ENCODE measurements at regions of chr5 and their contacts with region 1.

Region 1: DNA sequence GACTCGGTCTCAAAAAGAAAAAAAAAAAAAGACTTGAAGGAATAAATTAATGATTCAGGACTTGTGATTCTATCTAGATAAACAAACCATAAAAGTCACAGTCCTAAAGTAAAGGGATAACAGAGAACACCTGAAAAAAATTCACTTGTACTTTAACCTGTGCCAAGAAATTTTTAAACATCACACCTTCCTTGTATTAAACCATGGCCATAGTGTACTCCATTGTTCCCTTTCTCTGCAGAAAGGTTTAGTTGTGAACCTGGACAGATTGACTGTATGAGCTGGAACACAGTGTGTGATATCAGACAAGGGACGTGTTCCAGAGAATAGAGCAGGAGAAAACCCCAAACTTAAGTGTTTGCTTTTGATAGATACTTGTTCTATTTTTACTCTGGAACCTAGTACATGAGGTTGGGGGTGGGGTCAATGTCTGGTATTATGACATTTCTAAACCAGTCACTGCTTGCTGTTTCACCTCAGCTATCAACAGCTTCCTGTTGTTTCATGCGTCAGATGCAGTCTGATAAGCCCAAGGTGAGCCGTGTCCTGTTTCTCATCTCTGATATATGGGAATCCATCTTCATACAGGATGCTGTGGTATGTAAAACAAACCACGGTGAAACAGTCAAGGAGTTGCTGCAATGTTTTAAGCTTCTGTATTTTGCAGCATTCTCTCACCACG is 62.5 kb upstream of the ITGA1 start:
- DNase-seq: peak in 8 of 9 donors; percentile 44 to 94 (median 90)
- ATAC-seq: peak; percentile 98
- H3K4me3 ChIP-seq: no peak overlapping the region
- H3K4me3 Mint-ChIP-seq: peak overlapping the region; percentile 63 to 92 (median 81)
- H3K27ac ChIP-seq: peak overlapping the region; percentile 61
- H3K27ac Mint-ChIP-seq: peak overlapping the region; percentile 89 to 98 (median 95)
- H3K4me1 ChIP-seq: peaks cover 33 to 37% of the 10 kb centered on the region in 2 donors
- H3K4me1 Mint-ChIP-seq: peaks cover 28 to 81% (median 69%) of the 10 kb centered on the region in 7 donors
- H3K27me3 ChIP-seq: no peaks in the 10 kb centered on the region
- H3K27me3 Mint-ChIP-seq: no peaks in the 10 kb centered on the region

Region 2: DNA sequence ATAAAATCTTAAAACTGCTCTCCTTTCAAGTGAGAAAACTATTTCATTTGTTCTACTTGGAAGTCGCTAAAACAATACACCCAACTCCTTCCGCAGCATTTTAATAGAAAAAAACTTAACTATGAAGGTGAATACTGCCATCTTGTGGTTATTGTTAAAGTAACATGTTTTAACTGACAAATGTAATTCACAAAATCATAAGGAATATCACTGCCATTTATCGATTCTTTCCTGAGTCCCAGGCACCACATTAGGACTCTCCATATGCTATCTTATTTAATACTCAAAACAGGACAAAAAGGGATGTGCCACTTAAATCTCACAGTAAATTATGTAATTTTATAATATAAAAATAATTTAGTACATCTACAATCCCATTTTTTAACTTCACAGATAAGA is 68.0 kb before region 1 on chr5:
- CTCF ChIA-PET with region 1: no interaction called
- POLR2A ChIA-PET with region 1: no interaction called
- intact Hi-C with region 1: loop called in 1 of 2 experiments (anchors 2 kb)
- DNase-seq: peak in 6 of 9 donors; percentile 14 to 61 (median 50)
- ATAC-seq: peak; percentile 57
- H3K4me3 ChIP-seq: no peak overlapping the region
- H3K4me3 Mint-ChIP-seq: no peak overlapping the region
- H3K27ac ChIP-seq: no peak overlapping the region
- H3K27ac Mint-ChIP-seq: no peak overlapping the region
- H3K4me1 ChIP-seq: no peaks in the 10 kb centered on the region
- H3K4me1 Mint-ChIP-seq: peaks cover 0 to 6% (median 0%) of the 10 kb centered on the region in 7 donors
- H3K27me3 ChIP-seq: no peaks in the 10 kb centered on the region
- H3K27me3 Mint-ChIP-seq: peaks cover 7 to 40% (median 11%) of the 10 kb centered on the region in 5 donors

Region 3: DNA sequence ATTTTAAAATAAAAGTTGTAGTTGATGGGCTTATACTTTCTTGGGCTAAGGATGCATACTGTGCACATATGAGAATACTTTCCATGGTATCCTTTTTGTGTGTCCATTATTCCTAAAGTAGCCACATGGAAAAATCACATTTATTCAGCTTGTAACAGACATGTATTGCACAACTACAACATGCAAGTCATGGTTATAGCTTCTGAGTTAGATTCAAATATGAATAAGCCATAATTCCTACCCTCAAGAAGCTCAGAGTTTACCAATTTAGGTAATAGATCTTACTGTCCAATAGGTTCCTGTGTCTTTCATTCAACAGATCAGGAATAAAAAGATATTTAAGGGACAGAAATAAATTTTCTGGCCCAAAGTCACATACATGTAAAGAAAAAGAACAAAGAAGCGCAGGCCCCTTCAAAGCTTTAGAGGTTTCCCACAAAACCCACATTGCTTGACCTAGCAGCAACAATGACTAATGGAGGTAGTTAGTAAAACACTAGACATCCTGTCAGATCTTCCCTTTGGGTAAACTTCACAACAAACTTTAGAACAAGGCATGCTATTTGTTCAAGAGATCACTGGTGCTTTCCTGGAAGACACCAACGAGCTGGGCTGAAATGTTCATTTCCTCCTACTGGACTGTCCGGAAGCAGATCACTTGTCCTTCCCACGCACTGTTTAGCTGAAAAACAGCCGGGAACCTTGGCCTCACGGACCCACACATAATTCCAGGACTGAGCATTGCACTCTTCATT is 15.9 kb before region 1 on chr5:
- CTCF ChIA-PET with region 1: no interaction called
- POLR2A ChIA-PET with region 1: interaction called, 4 read pairs
- intact Hi-C with region 1: loop called (anchors 1 kb)
- DNase-seq: peak in 1 of 9 donors; percentile 36
- ATAC-seq: no peak
- H3K4me3 ChIP-seq: no peak overlapping the region
- H3K4me3 Mint-ChIP-seq: peak overlapping the region in 1 of 10 donors; percentile 50
- H3K27ac ChIP-seq: no peak overlapping the region
- H3K27ac Mint-ChIP-seq: peak overlapping the region in 1 of 9 donors; percentile 61
- H3K4me1 ChIP-seq: peaks cover 20 to 39% of the 10 kb centered on the region in 2 donors
- H3K4me1 Mint-ChIP-seq: peaks cover 24 to 83% (median 63%) of the 10 kb centered on the region in 7 donors
- H3K27me3 ChIP-seq: no peaks in the 10 kb centered on the region
- H3K27me3 Mint-ChIP-seq: peaks cover 0 to 5% (median 0%) of the 10 kb centered on the region in 5 donors

Region 4: GRCh38 chr5:52743970-52744369 is 18.8 kb after region 1 on chr5:
- CTCF ChIA-PET with region 1: interaction called, 9 read pairs
- POLR2A ChIA-PET with region 1: interaction called, 17 read pairs
- intact Hi-C with region 1: loop called (anchors 1 kb)
- DNase-seq: peak in 8 of 9 donors; percentile 24 to 68 (median 54)
- ATAC-seq: peak; percentile 91
- H3K4me3 ChIP-seq: no peak overlapping the region
- H3K4me3 Mint-ChIP-seq: peak overlapping the region in 9 of 10 donors; percentile 42 to 70 (median 61)
- H3K27ac ChIP-seq: peak overlapping the region; percentile 49
- H3K27ac Mint-ChIP-seq: peak overlapping the region; percentile 80 to 93 (median 90)
- H3K4me1 ChIP-seq: peaks cover 35 to 36% of the 10 kb centered on the region in 2 donors
- H3K4me1 Mint-ChIP-seq: peaks cover 35 to 69% (median 61%) of the 10 kb centered on the region in 7 donors
- H3K27me3 ChIP-seq: no peaks in the 10 kb centered on the region
- H3K27me3 Mint-ChIP-seq: peaks cover 0 to 5% (median 0%) of the 10 kb centered on the region in 5 donors

Region 5: DNA sequence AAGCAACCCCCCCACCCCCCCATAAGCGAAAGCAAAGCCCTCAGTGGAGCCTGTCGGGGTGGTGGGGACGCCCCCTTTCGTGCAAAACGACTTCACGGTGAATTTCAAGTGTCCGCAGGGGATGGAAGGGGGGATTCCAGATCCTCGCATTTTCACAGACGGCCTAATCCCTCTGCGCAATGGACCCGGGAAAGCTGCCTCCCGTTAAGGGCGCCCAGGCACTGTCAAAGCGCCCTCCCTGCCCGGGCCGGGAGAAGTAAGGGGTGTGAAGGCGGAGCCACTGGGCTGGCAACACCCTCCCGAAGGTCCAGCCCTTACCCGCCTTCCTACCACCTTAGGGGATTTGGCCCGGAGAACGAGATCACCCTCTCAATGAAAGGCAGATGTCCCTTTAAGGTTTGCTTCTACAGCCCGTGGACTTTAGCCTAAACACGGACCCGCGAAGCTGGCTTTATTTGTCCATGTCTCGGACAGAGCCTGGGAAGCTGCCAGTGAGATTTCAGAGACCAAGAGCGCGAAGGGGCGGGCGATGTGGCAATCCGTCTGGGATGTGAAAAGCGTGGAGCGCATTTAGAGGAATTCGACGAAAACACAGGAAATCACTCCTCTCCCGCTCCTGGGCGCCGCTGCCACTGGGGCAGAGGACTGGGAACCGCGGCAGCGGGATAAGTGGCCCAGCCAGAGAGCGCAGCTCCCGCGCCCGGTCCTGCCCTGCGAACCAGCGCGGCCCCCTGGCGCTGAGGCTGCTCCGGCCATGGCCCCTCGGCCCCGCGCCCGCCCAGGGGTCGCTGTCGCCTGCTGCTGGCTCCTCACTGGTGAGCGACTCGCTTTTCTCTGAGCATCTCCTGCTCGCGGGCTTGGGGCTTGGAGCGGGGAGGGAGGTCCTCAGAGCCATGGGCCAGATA is 62.6 kb after region 1 on chr5 and contains the starts of genes ITGA1 and PELO:
- CTCF ChIA-PET with region 1: interaction called, 3 read pairs
- POLR2A ChIA-PET with region 1: interaction called, 5 read pairs
- intact Hi-C with region 1: loop called (anchors 1 to 5 kb)
- DNase-seq: peak; percentile 13 to 55 (median 44)
- ATAC-seq: peak; percentile 84
- H3K4me3 ChIP-seq: peak within 1 kb of the TSS; percentile 71
- H3K4me3 Mint-ChIP-seq: peak within 1 kb of the TSS; percentile 85 to 95 (median 92)
- H3K27ac ChIP-seq: peak within 1 kb of the TSS; percentile 67
- H3K27ac Mint-ChIP-seq: peak within 1 kb of the TSS; percentile 7 to 87 (median 59)
- H3K4me1 ChIP-seq: peaks cover 0 to 15% of the 10 kb centered on the region in 2 donors
- H3K4me1 Mint-ChIP-seq: peaks cover 16 to 40% (median 33%) of the 10 kb centered on the region in 7 donors
- H3K27me3 ChIP-seq: no peaks in the 10 kb centered on the region
- H3K27me3 Mint-ChIP-seq: peaks cover 0 to 41% (median 3%) of the 10 kb centered on the region in 5 donors
- total RNA-seq, gene ITGA1: 0.92 to 8.7 (median 2.4) TPM
- total RNA-seq, gene PELO: 7.7 to 16.8 (median 9.7) TPM

Region 6: DNA sequence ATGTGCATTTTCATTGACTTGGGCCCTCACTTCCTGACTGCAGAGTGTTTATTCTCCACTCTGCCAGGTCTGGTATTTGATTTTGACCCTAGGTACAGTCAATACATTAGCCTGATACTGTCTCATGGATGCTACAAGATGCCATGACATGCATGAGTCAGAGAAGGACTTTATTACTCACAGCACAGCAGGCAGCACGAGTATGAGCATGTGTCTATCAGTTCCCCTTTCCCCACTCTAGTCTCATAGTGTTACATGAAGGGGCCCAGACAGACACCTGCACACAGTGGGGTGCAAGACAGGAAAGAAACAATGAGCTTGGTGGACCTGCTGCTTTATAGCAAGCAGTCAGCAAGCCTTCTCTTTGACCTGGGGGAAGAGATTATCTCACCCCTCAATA is 283.5 kb after region 1 on chr5:
- CTCF ChIA-PET with region 1: no interaction called
- POLR2A ChIA-PET with region 1: no interaction called
- intact Hi-C with region 1: loop called in 1 of 2 experiments (anchors 10 kb)
- DNase-seq: peak in 1 of 9 donors; percentile 45
- ATAC-seq: peak; percentile 59
- H3K4me3 ChIP-seq: no peak overlapping the region
- H3K4me3 Mint-ChIP-seq: peak overlapping the region in 1 of 10 donors; percentile 21
- H3K27ac ChIP-seq: no peak overlapping the region
- H3K27ac Mint-ChIP-seq: peak overlapping the region in 2 of 9 donors; percentile 23 to 76
- H3K4me1 ChIP-seq: peaks cover 0 to 9% of the 10 kb centered on the region in 2 donors
- H3K4me1 Mint-ChIP-seq: peaks cover 0 to 78% (median 23%) of the 10 kb centered on the region in 7 donors
- H3K27me3 ChIP-seq: no peaks in the 10 kb centered on the region
- H3K27me3 Mint-ChIP-seq: peaks cover 0 to 3% (median 0%) of the 10 kb centered on the region in 5 donors